ENCODE measurements at regions of chr2 and their contacts with region 1.

Region 1: GRCh38 chr2:191691016-191691735 is 13.2 kb downstream of the NABP1 start:
- H3K4me3 Mint-ChIP-seq: no peak overlapping the region
- H3K27ac Mint-ChIP-seq: peak overlapping the region; percentile 25
- H3K4me1 Mint-ChIP-seq: peaks cover 15% of the 10 kb centered on the region
- H3K27me3 Mint-ChIP-seq: no peaks in the 10 kb centered on the region

Region 2: DNA sequence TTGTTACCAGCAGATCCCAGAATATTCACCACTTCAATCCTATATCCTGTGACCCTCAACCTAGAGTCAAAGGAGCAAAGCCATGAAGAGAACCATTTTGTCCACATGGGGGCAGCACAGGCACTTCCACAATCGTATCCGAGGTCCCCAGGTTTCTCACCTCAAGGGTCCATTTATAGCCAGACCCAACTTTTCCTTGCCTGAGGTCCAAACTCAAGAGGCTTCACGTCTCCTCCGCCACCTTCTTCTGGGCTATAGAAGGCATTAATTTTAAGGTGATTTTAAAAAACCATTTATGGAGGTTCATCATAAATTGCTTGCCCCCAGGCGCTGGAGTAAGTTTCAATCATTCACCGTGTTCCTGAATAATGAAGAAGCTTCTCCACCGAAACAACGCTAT is 124.8 kb before region 1 on chr2:
- intact Hi-C with region 1: loop called (anchors 1 kb)
- H3K4me3 Mint-ChIP-seq: no peak overlapping the region
- H3K27ac Mint-ChIP-seq: no peak overlapping the region
- H3K4me1 Mint-ChIP-seq: peaks cover 34% of the 10 kb centered on the region
- H3K27me3 Mint-ChIP-seq: peaks cover 5% of the 10 kb centered on the region

Region 3: GRCh38 chr2:191617575-191617974 is 73.6 kb before region 1 on chr2:
- intact Hi-C with region 1: loop called (anchors 5 kb)
- H3K4me3 Mint-ChIP-seq: no peak overlapping the region
- H3K27ac Mint-ChIP-seq: peak overlapping the region; percentile 52
- H3K4me1 Mint-ChIP-seq: peaks cover 33% of the 10 kb centered on the region
- H3K27me3 Mint-ChIP-seq: no peaks in the 10 kb centered on the region

Region 4: DNA sequence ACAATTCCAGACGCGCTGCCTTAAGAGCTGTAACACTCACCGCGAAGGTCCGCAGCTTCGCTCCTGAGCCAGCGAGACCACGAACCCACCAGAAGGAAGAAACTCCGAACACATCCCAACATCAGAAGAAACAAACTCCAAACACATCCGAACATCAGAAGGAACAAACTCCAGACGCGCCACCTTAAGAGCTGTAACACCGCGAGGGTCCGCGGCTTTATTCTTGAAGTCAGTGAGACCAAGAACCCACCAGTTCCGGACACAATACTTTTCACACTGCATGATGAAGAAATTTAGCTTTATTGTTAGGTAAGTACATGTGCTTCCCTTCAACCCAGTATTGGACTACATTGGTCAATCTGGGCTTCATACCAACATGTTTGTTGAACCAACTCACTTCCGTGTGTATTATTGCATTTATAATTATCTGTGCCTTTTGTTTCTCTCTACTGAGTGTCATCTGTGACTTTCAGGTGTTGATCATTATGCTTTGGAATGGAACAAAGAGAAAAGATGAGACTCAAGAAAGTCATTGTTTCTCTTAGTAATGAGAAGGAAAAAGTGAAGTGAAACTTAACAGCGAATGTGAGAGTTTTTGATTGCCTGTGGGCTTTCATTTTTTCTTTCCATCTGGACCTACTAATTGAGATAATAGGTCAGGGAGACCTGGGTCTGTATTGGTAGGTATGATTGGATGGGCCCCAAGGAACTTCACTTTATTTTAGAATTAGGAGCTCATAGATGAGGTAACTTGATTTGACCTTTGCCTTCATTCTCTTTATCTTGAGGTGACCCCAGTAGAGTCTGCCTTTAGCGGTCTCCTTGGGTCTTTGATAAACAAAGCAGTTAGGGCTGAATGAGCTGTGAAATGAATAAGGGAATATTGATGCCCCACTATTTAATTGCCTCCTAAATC is 231.8 kb after region 1 on chr2:
- intact Hi-C with region 1: no loop called
- H3K4me3 Mint-ChIP-seq: no peak overlapping the region
- H3K27ac Mint-ChIP-seq: no peak overlapping the region
- H3K4me1 Mint-ChIP-seq: no peaks in the 10 kb centered on the region
- H3K27me3 Mint-ChIP-seq: no peaks in the 10 kb centered on the region

Region 5: DNA sequence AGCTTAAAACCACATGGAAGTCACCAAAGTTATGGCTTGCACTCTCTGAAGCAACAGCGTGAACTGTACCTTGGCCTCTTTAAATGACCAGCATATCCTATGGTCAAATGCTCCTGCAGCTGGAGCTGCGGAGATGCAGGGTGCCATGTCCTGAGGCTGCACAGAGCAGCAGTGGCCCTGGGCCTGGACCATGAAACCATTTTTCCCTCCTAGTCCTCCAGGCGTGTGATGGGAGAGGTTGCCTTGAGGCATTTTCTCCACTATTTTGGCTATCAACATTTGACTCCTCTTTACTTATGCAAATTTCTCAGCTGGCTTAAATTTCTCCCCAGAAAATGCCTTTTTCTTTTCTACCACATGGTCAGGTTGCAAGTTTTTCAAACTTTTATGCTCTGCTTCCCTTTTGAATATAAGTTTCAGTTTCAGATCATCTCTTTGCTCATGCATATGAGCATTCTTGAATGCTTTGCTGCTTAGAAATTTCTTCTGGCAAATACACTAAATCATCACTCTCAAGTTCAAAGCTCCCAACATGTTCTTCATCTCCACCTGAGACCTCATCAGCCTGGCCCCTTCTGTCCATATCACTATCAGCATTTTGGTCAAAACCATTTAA is 586.4 kb after region 1 on chr2:
- intact Hi-C with region 1: no loop called
- H3K4me3 Mint-ChIP-seq: no peak overlapping the region
- H3K27ac Mint-ChIP-seq: no peak overlapping the region
- H3K4me1 Mint-ChIP-seq: peaks cover 19% of the 10 kb centered on the region
- H3K27me3 Mint-ChIP-seq: no peaks in the 10 kb centered on the region

Measured in dendritic cell treated with granulocyte-macrophage colony-stimulating factor and Interleukin-4, amounts not matched to agents 40 ng/mL and 50 ng/mL, for 4 days (primary cell).